ENCODE measurements at regions of chr18 and their contacts with region 1.

Region 1: DNA sequence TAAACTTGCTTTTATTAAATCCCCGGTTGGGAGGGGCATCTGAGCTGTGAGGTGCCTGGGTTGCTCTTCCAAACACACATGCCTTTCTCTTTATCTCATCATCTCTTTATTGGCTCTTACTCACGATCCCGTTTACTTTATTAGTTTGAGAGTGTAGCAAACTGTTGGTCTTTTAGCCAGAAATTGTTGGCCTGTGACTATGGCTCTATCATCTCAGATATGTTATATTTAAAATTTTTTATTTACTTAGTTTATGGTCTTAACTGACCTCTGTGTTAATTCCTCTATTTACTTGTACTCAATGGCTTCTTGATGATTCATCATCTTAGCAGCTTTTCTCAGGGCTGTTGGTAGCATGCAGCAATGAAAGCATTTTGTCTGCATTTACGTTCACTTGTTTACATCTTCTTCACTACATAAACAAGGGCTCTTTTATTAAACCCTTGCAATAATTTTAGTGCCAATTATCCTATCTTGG is 408.4 kb downstream of the HRH4 start:
- DNase-seq: no peak
- H3K4me3 ChIP-seq: no peak overlapping the region
- H3K27ac ChIP-seq: no peak overlapping the region
- H3K4me1 ChIP-seq: no peaks in the 10 kb centered on the region
- CTCF ChIP-seq: no peak

Region 2: DNA sequence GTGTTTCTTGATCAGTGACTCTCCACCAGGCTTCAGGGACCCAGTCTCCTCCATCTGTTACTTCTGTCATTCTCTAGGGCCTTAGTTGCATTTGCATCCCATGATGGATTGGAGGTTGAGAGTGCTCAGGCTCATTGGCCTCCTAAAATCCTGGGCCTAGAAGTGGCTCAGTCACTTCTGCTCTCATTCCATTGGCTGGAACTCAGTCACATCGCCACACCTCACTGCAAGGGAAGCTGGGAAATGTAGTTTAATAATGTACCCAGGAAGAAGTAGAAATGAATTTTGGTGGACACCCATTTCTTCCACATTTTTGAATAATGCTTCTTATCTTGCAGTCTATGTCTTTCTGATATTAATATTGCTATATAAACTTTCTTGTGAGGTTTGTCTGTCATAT is 184.8 kb before region 1 on chr18:
- CTCF ChIA-PET with region 1: no interaction called
- POLR2A ChIA-PET with region 1: no interaction called
- intact Hi-C with region 1: no loop called
- DNase-seq: peak; percentile 26
- H3K4me3 ChIP-seq: no peak overlapping the region
- H3K27ac ChIP-seq: no peak overlapping the region
- H3K4me1 ChIP-seq: no peaks in the 10 kb centered on the region
- CTCF ChIP-seq: no peak

Region 3: GRCh38 chr18:24801001-24801400 is 67.8 kb before region 1 on chr18:
- CTCF ChIA-PET with region 1: no interaction called
- POLR2A ChIA-PET with region 1: no interaction called
- intact Hi-C with region 1: loop called (anchors 10 kb)
- DNase-seq: no peak
- H3K4me3 ChIP-seq: no peak overlapping the region
- H3K27ac ChIP-seq: no peak overlapping the region
- H3K4me1 ChIP-seq: no peaks in the 10 kb centered on the region
- CTCF ChIP-seq: no peak

Region 4: GRCh38 chr18:25033747-25034471 is 165.1 kb after region 1 on chr18:
- CTCF ChIA-PET with region 1: no interaction called
- POLR2A ChIA-PET with region 1: no interaction called
- intact Hi-C with region 1: no loop called
- DNase-seq: no peak
- H3K4me3 ChIP-seq: no peak overlapping the region
- H3K27ac ChIP-seq: no peak overlapping the region
- H3K4me1 ChIP-seq: peaks cover 23% of the 10 kb centered on the region
- CTCF ChIP-seq: no peak